ENCODE measurements at regions of chr17 and their contacts with region 1.

Region 1: GRCh38 chr17:78708510-78708973 is 73.5 kb downstream of the CYTH1 start:
- DNase-seq: peak; percentile 65
- ATAC-seq: peak; percentile 78
- H3K4me3 Mint-ChIP-seq: peak overlapping the region; percentile 26
- H3K27ac Mint-ChIP-seq: peak overlapping the region; percentile 87
- H3K4me1 Mint-ChIP-seq: peaks cover 67% of the 10 kb centered on the region
- H3K27me3 Mint-ChIP-seq: no peaks in the 10 kb centered on the region
- CTCF ChIP-seq: peak; percentile 87

Region 2: DNA sequence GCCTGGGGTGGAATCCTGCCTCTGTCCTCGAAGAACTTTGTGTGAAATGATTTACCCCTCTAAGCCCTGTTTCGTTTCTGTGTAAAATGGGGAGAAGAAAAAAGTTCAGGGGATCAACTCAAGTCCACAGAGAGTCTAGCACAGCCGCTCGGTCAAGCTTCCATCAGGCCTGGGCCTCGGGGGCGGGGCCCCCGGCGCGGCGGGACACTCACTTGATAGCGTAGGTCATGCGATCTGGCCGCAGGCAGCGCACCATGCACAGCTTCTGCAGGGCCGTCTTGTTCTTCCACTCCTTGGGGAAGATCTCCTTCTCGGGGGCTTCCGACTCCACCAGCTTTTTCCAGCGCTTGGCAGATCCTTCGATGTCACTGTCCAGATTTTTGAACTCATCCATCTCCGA is 264.1 kb before region 1 on chr17:
- CTCF ChIA-PET with region 1: interaction called, 12 read pairs
- POLR2A ChIA-PET with region 1: no interaction called
- intact Hi-C with region 1: no loop called
- DNase-seq: no peak
- ATAC-seq: no peak
- H3K4me3 Mint-ChIP-seq: no peak overlapping the region
- H3K27ac Mint-ChIP-seq: no peak overlapping the region
- H3K4me1 Mint-ChIP-seq: no peaks in the 10 kb centered on the region
- H3K27me3 Mint-ChIP-seq: no peaks in the 10 kb centered on the region
- CTCF ChIP-seq: no peak

Region 3: GRCh38 chr17:78697554-78698343 is 10.8 kb before region 1 on chr17:
- CTCF ChIA-PET with region 1: interaction called, 11 read pairs
- POLR2A ChIA-PET with region 1: interaction called, 4 read pairs
- intact Hi-C with region 1: no loop called
- DNase-seq: no peak
- ATAC-seq: peak; percentile 27
- H3K4me3 Mint-ChIP-seq: no peak overlapping the region
- H3K27ac Mint-ChIP-seq: peak overlapping the region; percentile 43
- H3K4me1 Mint-ChIP-seq: peaks cover 12% of the 10 kb centered on the region
- H3K27me3 Mint-ChIP-seq: no peaks in the 10 kb centered on the region
- CTCF ChIP-seq: no peak

Region 4: GRCh38 chr17:78729641-78730040 is 21.1 kb after region 1 on chr17:
- CTCF ChIA-PET with region 1: interaction called, 24 read pairs
- POLR2A ChIA-PET with region 1: interaction called, 13 read pairs
- intact Hi-C with region 1: no loop called
- DNase-seq: no peak
- ATAC-seq: peak; percentile 27
- H3K4me3 Mint-ChIP-seq: peak overlapping the region; percentile 28
- H3K27ac Mint-ChIP-seq: peak overlapping the region; percentile 82
- H3K4me1 Mint-ChIP-seq: peaks cover 84% of the 10 kb centered on the region
- H3K27me3 Mint-ChIP-seq: no peaks in the 10 kb centered on the region
- CTCF ChIP-seq: no peak

Region 5: GRCh38 chr17:78745407-78746088 is 37.0 kb after region 1 on chr17:
- CTCF ChIA-PET with region 1: interaction called, 55 read pairs
- POLR2A ChIA-PET with region 1: interaction called, 6 read pairs
- intact Hi-C with region 1: loop called (anchors 5 kb)
- DNase-seq: peak; percentile 68
- ATAC-seq: no peak
- H3K4me3 Mint-ChIP-seq: peak overlapping the region; percentile 19
- H3K27ac Mint-ChIP-seq: peak overlapping the region; percentile 99
- H3K4me1 Mint-ChIP-seq: peaks cover 91% of the 10 kb centered on the region
- H3K27me3 Mint-ChIP-seq: no peaks in the 10 kb centered on the region
- CTCF ChIP-seq: peak; percentile 86

Region 6: GRCh38 chr17:78759203-78759968 is 50.8 kb after region 1 on chr17:
- CTCF ChIA-PET with region 1: no interaction called
- POLR2A ChIA-PET with region 1: no interaction called
- intact Hi-C with region 1: no loop called
- DNase-seq: peak; percentile 90
- ATAC-seq: peak; percentile 72
- H3K4me3 Mint-ChIP-seq: peak overlapping the region; percentile 48
- H3K27ac Mint-ChIP-seq: peak overlapping the region; percentile 93
- H3K4me1 Mint-ChIP-seq: peaks cover 77% of the 10 kb centered on the region
- H3K27me3 Mint-ChIP-seq: no peaks in the 10 kb centered on the region
- CTCF ChIP-seq: no peak